ENCODE measurements at regions of chr9 and their contacts with region 1.

Region 1: DNA sequence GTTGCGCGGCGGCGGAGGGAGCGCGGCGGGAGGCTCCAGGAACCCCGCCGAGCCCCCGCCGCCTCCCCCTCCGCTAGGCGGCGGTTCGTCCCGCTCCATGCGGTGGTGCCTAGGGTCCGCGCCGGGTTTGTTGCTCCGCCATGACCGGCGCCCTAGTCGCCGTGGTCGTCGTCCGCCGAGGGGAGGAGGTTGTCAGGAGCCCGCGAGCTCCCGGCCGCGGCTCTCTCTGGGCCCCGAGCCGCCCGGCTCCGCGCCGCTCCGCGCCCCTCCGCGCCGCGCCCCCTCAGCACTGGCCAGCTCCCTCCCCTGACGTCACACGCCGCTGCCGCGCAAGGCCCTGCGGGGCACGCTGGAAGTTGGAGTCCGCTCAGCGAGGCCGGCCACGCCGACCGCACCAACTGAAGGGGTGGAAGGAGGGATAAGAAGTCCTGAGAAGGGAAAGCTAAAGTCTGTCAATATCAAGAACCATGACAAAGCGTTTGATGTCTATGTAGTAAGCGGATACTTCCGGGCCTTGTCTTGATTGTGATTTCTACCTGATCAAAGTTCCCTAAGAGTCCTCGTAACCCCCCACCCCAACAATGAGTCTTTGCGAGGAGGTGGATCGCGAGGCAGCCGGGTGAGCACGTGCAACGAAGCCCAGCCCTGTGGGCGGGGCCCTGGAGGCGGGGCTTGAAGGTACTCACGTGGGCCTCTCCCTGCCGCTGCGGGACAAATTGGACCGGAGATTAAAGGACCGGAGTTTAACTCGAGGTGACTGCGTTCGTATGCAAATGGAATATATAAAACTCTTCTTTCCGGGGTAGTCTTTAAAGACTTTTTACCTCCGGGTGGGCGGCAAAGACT is at the start of gene NR6A1:
- DNase-seq: peak; percentile 97 to 98
- ATAC-seq: peak; percentile 81 to 88
- H3K4me3 ChIP-seq: peak within 1 kb of the TSS; percentile 94
- H3K27ac ChIP-seq: peak within 1 kb of the TSS; percentile 82 to 95
- H3K4me1 ChIP-seq: peaks cover 30% of the 10 kb centered on the region; the same call in 2 of the 3 replicates
- CTCF ChIP-seq: peak; percentile 38
- EP300 ChIP-seq: no peak
- POLR2A ChIP-seq: peak; percentile 24; the same call in 1 of the 2 replicates
- RAD21 ChIP-seq: no peak
- polyA plus RNA-seq, gene NR6A1: 3.3 and 4.1 TPM in 2 replicates

Region 2: DNA sequence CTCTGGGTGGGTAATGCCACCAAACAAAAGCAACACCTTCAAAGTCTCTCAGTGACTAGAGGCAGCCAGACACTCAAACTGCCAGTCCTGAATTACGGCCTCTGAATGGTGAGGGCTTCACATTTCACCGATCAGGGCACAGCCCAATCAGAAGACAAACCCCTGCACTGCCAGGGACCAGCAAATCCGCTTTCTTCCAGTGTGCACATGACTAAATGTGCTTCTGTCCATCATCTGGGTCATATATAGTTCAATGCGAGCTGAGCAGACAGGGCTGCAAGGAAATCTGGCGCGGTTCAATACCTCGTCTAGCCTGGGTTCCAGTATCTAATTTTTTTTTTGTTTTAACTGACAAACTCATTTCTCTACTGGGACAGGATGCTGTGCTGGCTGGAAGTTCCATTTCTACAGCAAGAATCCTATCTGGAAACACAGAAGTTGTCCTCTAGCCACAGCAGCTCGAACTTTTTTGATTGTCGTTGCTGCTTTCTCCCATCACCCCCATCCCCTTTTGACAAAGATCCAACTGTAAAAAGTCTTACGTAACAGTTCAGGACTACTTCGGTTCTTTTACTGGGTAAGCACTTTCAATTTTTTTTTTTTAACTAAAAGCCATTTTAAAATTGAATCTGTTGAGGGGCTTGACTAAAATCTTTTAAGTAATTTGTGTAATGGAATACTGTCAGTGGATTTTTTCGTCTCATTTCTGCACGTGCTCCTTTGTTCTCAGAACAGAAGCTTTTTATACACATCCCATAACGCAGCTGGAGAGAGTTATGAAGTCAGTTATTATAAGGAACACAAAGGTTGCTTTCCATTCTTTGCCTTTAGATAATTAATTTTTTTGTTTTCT is 112.9 kb before region 1 on chr9:
- CTCF ChIA-PET with region 1: interaction called, 4 read pairs
- POLR2A ChIA-PET with region 1: interaction called, 10 read pairs
- DNase-seq: peak; percentile 95 to 97
- ATAC-seq: peak; percentile 95 to 96
- H3K4me3 ChIP-seq: peak overlapping the region; percentile 68
- H3K27ac ChIP-seq: peak overlapping the region; percentile 86 to 88
- H3K4me1 ChIP-seq: peaks cover 35% of the 10 kb centered on the region
- CTCF ChIP-seq: no peak
- EP300 ChIP-seq: no peak
- POLR2A ChIP-seq: peak; percentile 77
- RAD21 ChIP-seq: no peak

Region 3: GRCh38 chr9:124812401-124813016 is 41.3 kb after region 1 on chr9:
- CTCF ChIA-PET with region 1: interaction called, 785 read pairs
- POLR2A ChIA-PET with region 1: interaction called, 4 read pairs
- DNase-seq: peak; percentile 86 to 95
- ATAC-seq: peak; percentile 78 to 80
- H3K4me3 ChIP-seq: no peak overlapping the region
- H3K27ac ChIP-seq: peak overlapping the region; percentile 90 to 93
- H3K4me1 ChIP-seq: peaks cover 41% of the 10 kb centered on the region
- CTCF ChIP-seq: no peak
- EP300 ChIP-seq: peak in 1 of 2 experiments; percentile 17; a peak in 1 of 5 replicates
- POLR2A ChIP-seq: no peak
- RAD21 ChIP-seq: 0 out of 5 replicates have a peak, but pooled peaks of 1 of the 2 experiments have one; percentile 1

Region 4: DNA sequence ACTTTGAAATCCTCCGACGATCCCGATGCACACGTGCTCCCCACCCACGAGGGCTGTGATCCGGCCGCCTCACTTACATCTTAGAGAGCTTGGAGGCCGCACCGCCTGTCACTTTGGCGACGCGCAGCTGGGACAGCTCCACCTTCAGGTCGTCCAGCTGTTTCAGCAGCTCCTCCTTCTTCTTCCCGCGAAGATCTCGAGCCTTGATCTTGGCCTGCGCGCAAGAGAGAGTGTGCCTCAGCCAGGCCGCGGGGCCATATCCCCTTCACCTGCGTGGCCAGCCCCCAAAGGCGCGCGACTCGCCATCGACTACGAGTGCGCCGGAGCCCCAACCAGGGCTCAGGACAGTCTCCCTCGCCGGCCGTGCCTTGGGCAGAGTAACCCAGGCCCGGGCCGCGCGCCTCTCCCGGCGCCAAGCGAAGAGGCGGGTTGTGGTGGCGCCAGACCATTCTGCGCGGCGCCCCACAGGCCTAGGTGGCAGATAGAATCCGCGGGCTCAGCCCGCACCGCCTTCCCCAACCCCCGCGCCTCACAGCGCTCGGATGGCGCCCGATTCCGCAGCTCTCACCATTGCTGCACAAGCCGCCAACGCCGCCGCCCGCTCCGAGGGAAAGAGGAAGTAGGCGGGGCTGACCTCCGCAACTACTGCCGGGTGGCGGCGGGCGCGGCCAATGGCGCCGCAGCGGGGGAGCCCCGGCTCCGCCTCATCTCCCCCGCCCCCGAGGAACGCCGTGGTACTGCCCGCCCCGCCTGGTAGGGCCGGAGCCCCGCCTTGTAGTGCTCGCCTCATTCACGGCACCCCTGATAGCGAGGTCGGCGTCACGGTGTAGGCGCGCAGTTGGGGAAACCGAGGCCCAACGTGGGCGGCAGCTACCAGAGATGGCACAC is 90.3 kb after region 1 on chr9 and contains the starts of genes ARPC5L and RPL35:
- CTCF ChIA-PET with region 1: interaction called, 2,512 read pairs
- POLR2A ChIA-PET with region 1: interaction called, 52 read pairs
- DNase-seq: peak; percentile 94 to 95
- ATAC-seq: peak; percentile 92 to 94
- H3K4me3 ChIP-seq: peak within 1 kb of the TSS; percentile 85
- H3K27ac ChIP-seq: peak within 1 kb of the TSS; percentile 89 to 93
- H3K4me1 ChIP-seq: peaks cover 48% of the 10 kb centered on the region
- CTCF ChIP-seq: no peak
- EP300 ChIP-seq: no peak
- POLR2A ChIP-seq: peak; percentile 86
- RAD21 ChIP-seq: no peak
- polyA plus RNA-seq, gene ARPC5L: 44.9 and 62.8 TPM in 2 replicates
- polyA plus RNA-seq, gene RPL35: 3,076 and 3,452 TPM in 2 replicates

Region 5: GRCh38 chr9:124894741-124895170 is 123.5 kb after region 1 on chr9:
- CTCF ChIA-PET with region 1: interaction called, 11 read pairs
- POLR2A ChIA-PET with region 1: no interaction called
- DNase-seq: peak in 1 of 2 experiments; percentile 59
- ATAC-seq: peak; percentile 88 to 91
- H3K4me3 ChIP-seq: no peak overlapping the region
- H3K27ac ChIP-seq: no peak overlapping the region
- H3K4me1 ChIP-seq: no peaks in the 10 kb centered on the region; the same call in 2 of the 3 replicates
- CTCF ChIP-seq: peak; percentile 53
- EP300 ChIP-seq: no peak
- POLR2A ChIP-seq: no peak
- RAD21 ChIP-seq: peak; percentile 39 to 67; a peak in 4 of 5 replicates

Region 6: DNA sequence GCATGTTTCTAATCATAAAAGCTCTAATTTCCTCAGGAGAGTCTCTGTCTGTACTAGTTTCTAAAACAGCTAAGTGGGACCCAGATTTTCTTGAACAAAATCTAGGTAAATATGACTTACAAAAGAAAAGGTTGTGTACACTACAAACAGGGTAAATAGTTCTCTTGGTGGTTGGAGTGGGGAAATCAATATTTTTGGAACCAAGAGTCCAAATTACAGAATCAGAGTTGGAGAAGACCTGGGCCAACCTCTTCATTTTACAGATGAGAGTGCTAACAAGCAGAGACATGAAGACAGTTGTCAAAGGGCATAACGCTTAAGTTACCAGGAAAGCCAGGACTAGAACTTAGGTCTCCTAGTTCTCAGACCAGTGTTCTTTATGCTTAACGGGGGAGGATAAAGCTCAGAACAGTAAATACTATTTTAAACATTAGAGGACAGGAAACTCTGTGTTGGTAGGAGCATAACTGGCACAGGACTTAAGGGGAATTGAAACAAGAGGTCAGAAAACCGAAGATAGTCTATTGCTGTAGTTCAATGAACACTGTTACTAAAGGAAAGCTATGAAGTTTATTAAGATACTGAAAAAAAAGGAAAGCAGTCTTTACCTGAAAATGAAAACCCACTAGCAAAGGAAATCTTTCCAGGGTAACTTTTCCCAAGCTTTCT is 178.9 kb after region 1 on chr9:
- CTCF ChIA-PET with region 1: no interaction called
- POLR2A ChIA-PET with region 1: no interaction called
- DNase-seq: no peak
- ATAC-seq: no peak
- H3K4me3 ChIP-seq: no peak overlapping the region
- H3K27ac ChIP-seq: no peak overlapping the region
- H3K4me1 ChIP-seq: no peaks in the 10 kb centered on the region
- CTCF ChIP-seq: no peak
- EP300 ChIP-seq: no peak
- POLR2A ChIP-seq: no peak
- RAD21 ChIP-seq: no peak

Region 7: GRCh38 chr9:125374443-125375309 is 603.4 kb after region 1 on chr9:
- CTCF ChIA-PET with region 1: interaction called, 11 read pairs
- POLR2A ChIA-PET with region 1: no interaction called
- DNase-seq: peak; percentile 72 to 77
- ATAC-seq: peak; percentile 85 to 94
- H3K4me3 ChIP-seq: peak overlapping the region; percentile 27; the same call in 2 of the 3 replicates
- H3K27ac ChIP-seq: peak overlapping the region in 1 of 2 experiments; percentile 55; a peak in 2 of 6 replicates
- H3K4me1 ChIP-seq: peaks cover 7% of the 10 kb centered on the region; the same call in 2 of the 3 replicates
- CTCF ChIP-seq: peak; percentile 91
- EP300 ChIP-seq: no peak
- POLR2A ChIP-seq: no peak
- RAD21 ChIP-seq: peak; percentile 98